HEK293T (cell line): ENCODE measurements at regions of chr2 and their contacts with region 1.

Region 1: GRCh38 chr2:30711646-30712085 is 95.6 kb downstream of the CAPN13 start:
- DNase-seq: peak; percentile 72

Region 2: GRCh38 chr2:30165050-30165520 is 546.6 kb before region 1 on chr2:
- CTCF ChIA-PET with region 1: interaction called, 53 read pairs
- POLR2A ChIA-PET with region 1: no interaction called
- DNase-seq: peak; percentile 88

Region 3: DNA sequence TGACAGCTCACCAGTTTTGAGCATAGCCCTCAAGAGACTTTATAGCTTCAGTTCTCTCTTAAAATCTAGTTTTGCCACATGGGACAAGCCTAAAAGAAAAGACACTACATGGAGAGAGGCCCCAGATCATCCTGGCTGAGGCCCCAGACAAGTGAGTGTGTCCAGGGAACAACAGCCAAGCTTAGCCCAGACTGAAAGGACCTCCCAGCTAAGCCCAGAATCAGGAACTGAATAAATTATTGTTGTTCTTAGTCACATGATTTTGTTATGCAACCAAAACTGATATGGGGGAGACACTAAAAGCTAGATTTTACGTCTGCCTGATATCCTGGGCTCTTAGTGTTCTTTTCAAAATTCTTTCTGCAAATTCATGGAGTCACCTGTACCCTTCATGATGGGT is 509.7 kb before region 1 on chr2:
- CTCF ChIA-PET with region 1: interaction called, 56 read pairs
- POLR2A ChIA-PET with region 1: no interaction called
- DNase-seq: no peak

Region 4: DNA sequence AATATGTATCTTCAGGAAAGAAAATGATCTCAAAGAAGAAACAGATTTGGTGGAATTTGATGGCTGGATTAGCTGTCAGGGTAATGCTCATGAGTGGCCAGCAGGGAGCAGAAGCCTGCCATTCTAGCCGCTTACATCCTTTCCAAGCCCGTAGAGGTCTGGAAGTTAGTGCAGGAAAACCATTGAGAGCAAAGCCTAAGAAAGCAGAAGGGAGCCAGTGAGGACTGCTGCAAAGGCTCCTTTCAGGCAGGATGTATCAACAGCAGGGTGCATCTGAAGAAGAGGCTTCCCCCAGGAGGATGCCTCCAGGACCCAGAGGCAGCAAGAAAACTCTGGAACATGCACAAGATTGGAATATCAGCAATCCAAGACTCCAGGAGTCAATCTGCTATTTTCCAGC is 503.2 kb before region 1 on chr2:
- CTCF ChIA-PET with region 1: interaction called, 56 read pairs
- POLR2A ChIA-PET with region 1: no interaction called
- DNase-seq: peak; percentile 75

Region 5: GRCh38 chr2:30940839-30941238 is 229.2 kb after region 1 on chr2:
- CTCF ChIA-PET with region 1: no interaction called
- POLR2A ChIA-PET with region 1: no interaction called
- DNase-seq: no peak

Region 6: GRCh38 chr2:31333527-31334183 is 622.0 kb after region 1 on chr2:
- CTCF ChIA-PET with region 1: interaction called, 16 read pairs
- POLR2A ChIA-PET with region 1: no interaction called
- DNase-seq: peak; percentile 73